Activated CD8-positive, alpha-beta T cell treated with anti-CD3 and anti-CD28 coated beads for 36 hours (primary cell): ENCODE measurements at regions of chr5 and their contacts with region 1.

Region 1: GRCh38 chr5:76544268-76544926 is 78.8 kb downstream of the F2RL2 start:
- DNase-seq: peak; percentile 75
- ATAC-seq: peak; percentile 29
- H3K4me3 Mint-ChIP-seq: peak overlapping the region; percentile 56
- H3K27ac Mint-ChIP-seq: peak overlapping the region; percentile 92
- H3K4me1 Mint-ChIP-seq: peaks cover 75% of the 10 kb centered on the region
- H3K27me3 Mint-ChIP-seq: no peaks in the 10 kb centered on the region
- CTCF ChIP-seq: peak; percentile 73

Region 2: GRCh38 chr5:75511435-75512384 is 1032.7 kb before region 1 on chr5 and contains the starts of genes CERT1 and POLK:
- CTCF ChIA-PET with region 1: no interaction called
- POLR2A ChIA-PET with region 1: no interaction called
- intact Hi-C with region 1: loop called (anchors 10 kb)
- DNase-seq: peak; percentile 97
- ATAC-seq: peak; percentile 95
- H3K4me3 Mint-ChIP-seq: peak within 1 kb of the TSS; percentile 99
- H3K27ac Mint-ChIP-seq: peak within 1 kb of the TSS; percentile 96
- H3K4me1 Mint-ChIP-seq: peaks cover 45% of the 10 kb centered on the region
- H3K27me3 Mint-ChIP-seq: no peaks in the 10 kb centered on the region
- CTCF ChIP-seq: no peak
- total RNA-seq, gene CERT1: 23.9 to 24.6 TPM
- total RNA-seq, gene POLK: 29.5 to 30.6 TPM

Region 3: GRCh38 chr5:76331126-76331525 is 213.3 kb before region 1 on chr5:
- CTCF ChIA-PET with region 1: interaction called, 6 read pairs
- POLR2A ChIA-PET with region 1: no interaction called
- intact Hi-C with region 1: loop called (anchors 5 kb)
- DNase-seq: peak; percentile 27
- ATAC-seq: peak; percentile 75
- H3K4me3 Mint-ChIP-seq: no peak overlapping the region
- H3K27ac Mint-ChIP-seq: peak overlapping the region; percentile 41
- H3K4me1 Mint-ChIP-seq: peaks cover 52% of the 10 kb centered on the region
- H3K27me3 Mint-ChIP-seq: no peaks in the 10 kb centered on the region
- CTCF ChIP-seq: no peak

Region 4: GRCh38 chr5:76473661-76474060 is 70.7 kb before region 1 on chr5:
- CTCF ChIA-PET with region 1: interaction called, 3 read pairs
- POLR2A ChIA-PET with region 1: interaction called, 3 read pairs
- intact Hi-C with region 1: loop called (anchors 2 kb)
- DNase-seq: peak; percentile 85
- ATAC-seq: peak; percentile 89
- H3K4me3 Mint-ChIP-seq: peak overlapping the region; percentile 3
- H3K27ac Mint-ChIP-seq: peak overlapping the region; percentile 87
- H3K4me1 Mint-ChIP-seq: peaks cover 71% of the 10 kb centered on the region
- H3K27me3 Mint-ChIP-seq: no peaks in the 10 kb centered on the region
- CTCF ChIP-seq: no peak

Region 5: GRCh38 chr5:76527685-76528161 is 16.7 kb before region 1 on chr5:
- CTCF ChIA-PET with region 1: interaction called, 20 read pairs
- POLR2A ChIA-PET with region 1: interaction called, 4 read pairs
- intact Hi-C with region 1: no loop called
- DNase-seq: no peak
- ATAC-seq: peak; percentile 20
- H3K4me3 Mint-ChIP-seq: no peak overlapping the region
- H3K27ac Mint-ChIP-seq: no peak overlapping the region
- H3K4me1 Mint-ChIP-seq: peaks cover 64% of the 10 kb centered on the region
- H3K27me3 Mint-ChIP-seq: no peaks in the 10 kb centered on the region
- CTCF ChIP-seq: no peak

Region 6: GRCh38 chr5:76582230-76583162 is 38.1 kb after region 1 on chr5:
- CTCF ChIA-PET with region 1: interaction called, 21 read pairs
- POLR2A ChIA-PET with region 1: interaction called, 3 read pairs
- intact Hi-C with region 1: no loop called
- DNase-seq: peak; percentile 17
- ATAC-seq: peak; percentile 81
- H3K4me3 Mint-ChIP-seq: no peak overlapping the region
- H3K27ac Mint-ChIP-seq: peak overlapping the region; percentile 17
- H3K4me1 Mint-ChIP-seq: peaks cover 19% of the 10 kb centered on the region
- H3K27me3 Mint-ChIP-seq: no peaks in the 10 kb centered on the region
- CTCF ChIP-seq: no peak